CD8-positive, alpha-beta T cell (primary cell): ENCODE measurements at regions of chr20 and their contacts with region 1.

Region 1: GRCh38 chr20:48620519-48621254 is 207.1 kb downstream of the PREX1 start:
- DNase-seq: peak; percentile 42 to 78 (median 70)
- ATAC-seq: peak; percentile 92
- H3K4me3 ChIP-seq: no peak overlapping the region
- H3K4me3 Mint-ChIP-seq: peak overlapping the region; percentile 76
- H3K27ac ChIP-seq: no peak overlapping the region
- H3K27ac Mint-ChIP-seq: no peak overlapping the region
- H3K4me1 ChIP-seq: peaks cover 12% of the 10 kb centered on the region
- H3K4me1 Mint-ChIP-seq: peaks cover 10% of the 10 kb centered on the region
- H3K27me3 ChIP-seq: no peaks in the 10 kb centered on the region
- H3K27me3 Mint-ChIP-seq: no peaks in the 10 kb centered on the region
- CTCF ChIP-seq: peak; percentile 96

Region 2: GRCh38 chr20:47663333-47664067 is 957.2 kb before region 1 on chr20:
- CTCF ChIA-PET with region 1: interaction called, 39 read pairs
- POLR2A ChIA-PET with region 1: no interaction called
- intact Hi-C with region 1: loop called in 1 of 2 experiments (anchors 1 kb)
- DNase-seq: peak; percentile 59 to 83 (median 72)
- ATAC-seq: peak; percentile 87
- H3K4me3 ChIP-seq: no peak overlapping the region
- H3K4me3 Mint-ChIP-seq: no peak overlapping the region
- H3K27ac ChIP-seq: no peak overlapping the region
- H3K27ac Mint-ChIP-seq: no peak overlapping the region
- H3K4me1 ChIP-seq: no peaks in the 10 kb centered on the region
- H3K4me1 Mint-ChIP-seq: peaks cover 3% of the 10 kb centered on the region
- H3K27me3 ChIP-seq: no peaks in the 10 kb centered on the region
- H3K27me3 Mint-ChIP-seq: no peaks in the 10 kb centered on the region
- CTCF ChIP-seq: peak; percentile 87

Region 3: DNA sequence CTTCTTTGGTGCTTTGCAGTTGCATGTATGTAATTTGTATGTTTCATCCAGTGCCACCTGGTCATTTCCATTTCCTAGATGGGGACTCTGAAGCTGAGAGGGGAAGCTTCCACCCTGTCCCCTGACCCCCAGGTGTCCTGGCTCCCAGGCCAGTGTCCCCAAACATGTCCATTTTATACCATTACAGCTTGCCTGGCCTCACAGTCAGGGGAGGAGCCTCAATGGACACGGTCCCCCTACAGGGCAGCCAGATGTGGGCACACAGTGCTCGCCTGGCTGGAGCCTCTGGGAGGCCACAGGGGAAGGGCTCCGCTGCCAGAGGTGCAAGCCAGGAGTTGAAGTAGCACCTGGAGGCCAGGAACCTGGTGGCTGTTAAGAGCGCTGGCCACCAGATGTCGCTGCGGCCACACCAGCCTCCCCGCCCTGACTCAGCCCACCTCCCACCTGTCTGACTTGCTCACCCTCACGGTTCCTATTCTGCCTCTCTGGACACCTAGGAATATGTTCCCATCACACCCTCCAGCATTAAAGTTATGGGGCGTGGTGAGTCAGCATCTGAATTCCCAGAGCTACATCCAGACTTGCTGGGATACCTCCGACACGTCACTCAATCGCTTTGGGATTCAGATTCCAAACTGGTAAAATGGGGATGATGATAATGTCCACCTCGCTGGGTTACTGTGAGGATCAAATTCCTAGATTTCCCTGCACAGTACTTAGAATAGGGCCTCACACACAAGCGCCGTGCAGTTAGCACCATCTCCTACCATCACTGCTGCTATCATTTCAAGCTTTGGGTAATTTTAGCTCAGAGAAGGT is 942.8 kb before region 1 on chr20:
- CTCF ChIA-PET with region 1: interaction called, 92 read pairs
- POLR2A ChIA-PET with region 1: no interaction called
- intact Hi-C with region 1: loop called in 1 of 2 experiments (anchors 1 kb)
- DNase-seq: peak; percentile 16 to 69 (median 54)
- ATAC-seq: peak; percentile 68
- H3K4me3 ChIP-seq: no peak overlapping the region
- H3K4me3 Mint-ChIP-seq: no peak overlapping the region
- H3K27ac ChIP-seq: no peak overlapping the region
- H3K27ac Mint-ChIP-seq: no peak overlapping the region
- H3K4me1 ChIP-seq: peaks cover 4% of the 10 kb centered on the region
- H3K4me1 Mint-ChIP-seq: peaks cover 3% of the 10 kb centered on the region
- H3K27me3 ChIP-seq: no peaks in the 10 kb centered on the region
- H3K27me3 Mint-ChIP-seq: no peaks in the 10 kb centered on the region
- CTCF ChIP-seq: peak; percentile 67

Region 4: DNA sequence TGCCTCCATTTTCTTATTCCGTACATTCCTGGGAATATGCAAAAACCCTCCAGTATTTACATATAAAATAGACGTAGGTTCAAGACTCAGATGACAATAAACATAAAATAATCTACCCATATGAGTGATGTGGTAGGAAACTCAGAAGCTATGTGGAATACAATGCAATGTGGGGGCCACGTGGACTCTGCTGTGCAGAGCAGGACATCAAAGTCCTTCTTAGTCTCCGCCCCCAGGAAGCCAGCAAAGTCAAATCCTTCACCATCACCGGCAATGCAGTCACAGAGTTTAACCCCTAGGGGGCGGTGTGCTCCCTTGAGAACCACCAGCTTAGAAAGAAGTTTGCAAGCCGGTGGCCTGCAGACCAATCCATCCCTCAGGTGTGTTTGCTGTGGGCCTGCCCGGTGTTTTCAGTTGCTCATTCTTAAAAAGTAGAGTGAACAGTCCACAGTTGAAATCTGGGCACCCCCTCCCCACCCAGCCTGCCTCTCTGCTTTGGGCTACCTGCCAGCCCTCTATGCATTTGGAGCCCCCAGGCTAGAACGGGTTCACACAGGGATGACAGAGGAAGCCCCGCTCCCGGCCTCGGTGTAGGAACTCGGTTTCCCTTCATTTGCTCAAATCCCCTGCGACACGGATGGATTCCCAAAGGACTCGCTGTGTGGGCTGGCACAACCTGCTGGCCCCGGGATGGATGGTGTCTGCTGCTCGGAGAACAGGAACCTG is 895.3 kb before region 1 on chr20:
- CTCF ChIA-PET with region 1: interaction called, 49 read pairs
- POLR2A ChIA-PET with region 1: no interaction called
- intact Hi-C with region 1: loop called (anchors 1 kb)
- DNase-seq: peak; percentile 61 to 90 (median 80)
- ATAC-seq: peak; percentile 64
- H3K4me3 ChIP-seq: no peak overlapping the region
- H3K4me3 Mint-ChIP-seq: no peak overlapping the region
- H3K27ac ChIP-seq: no peak overlapping the region
- H3K27ac Mint-ChIP-seq: peak overlapping the region; percentile 52
- H3K4me1 ChIP-seq: peaks cover 36% of the 10 kb centered on the region
- H3K4me1 Mint-ChIP-seq: peaks cover 41% of the 10 kb centered on the region
- H3K27me3 ChIP-seq: no peaks in the 10 kb centered on the region
- H3K27me3 Mint-ChIP-seq: no peaks in the 10 kb centered on the region
- CTCF ChIP-seq: peak; percentile 91

Region 5: DNA sequence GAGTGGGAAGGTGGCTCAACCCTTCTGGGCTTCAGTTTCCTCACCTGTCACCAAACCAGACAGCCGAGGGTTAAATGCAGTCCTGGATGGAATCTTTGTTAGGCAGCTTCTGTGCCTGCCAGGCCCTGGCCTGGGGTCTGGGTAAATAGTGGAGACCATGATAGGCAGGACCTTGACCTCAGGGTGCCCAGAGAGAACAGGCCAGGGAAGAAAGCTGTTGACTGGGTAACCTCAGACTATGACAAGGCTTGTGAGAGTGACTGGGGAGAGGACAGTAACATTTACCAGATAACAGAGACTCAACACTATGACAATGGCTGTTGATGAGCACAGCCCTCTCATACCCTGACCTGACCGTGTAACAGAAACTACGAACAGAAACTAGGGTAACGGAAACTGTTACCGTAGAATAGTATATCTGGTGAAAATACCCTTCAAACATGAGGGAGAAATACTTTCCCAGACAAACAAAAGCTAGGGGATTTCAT is 11.2 kb before region 1 on chr20:
- CTCF ChIA-PET with region 1: interaction called, 12 read pairs
- POLR2A ChIA-PET with region 1: no interaction called
- intact Hi-C with region 1: no loop called
- DNase-seq: no peak
- ATAC-seq: no peak
- H3K4me3 ChIP-seq: no peak overlapping the region
- H3K4me3 Mint-ChIP-seq: no peak overlapping the region
- H3K27ac ChIP-seq: no peak overlapping the region
- H3K27ac Mint-ChIP-seq: no peak overlapping the region
- H3K4me1 ChIP-seq: no peaks in the 10 kb centered on the region
- H3K4me1 Mint-ChIP-seq: no peaks in the 10 kb centered on the region
- H3K27me3 ChIP-seq: no peaks in the 10 kb centered on the region
- H3K27me3 Mint-ChIP-seq: no peaks in the 10 kb centered on the region
- CTCF ChIP-seq: no peak

Region 6: DNA sequence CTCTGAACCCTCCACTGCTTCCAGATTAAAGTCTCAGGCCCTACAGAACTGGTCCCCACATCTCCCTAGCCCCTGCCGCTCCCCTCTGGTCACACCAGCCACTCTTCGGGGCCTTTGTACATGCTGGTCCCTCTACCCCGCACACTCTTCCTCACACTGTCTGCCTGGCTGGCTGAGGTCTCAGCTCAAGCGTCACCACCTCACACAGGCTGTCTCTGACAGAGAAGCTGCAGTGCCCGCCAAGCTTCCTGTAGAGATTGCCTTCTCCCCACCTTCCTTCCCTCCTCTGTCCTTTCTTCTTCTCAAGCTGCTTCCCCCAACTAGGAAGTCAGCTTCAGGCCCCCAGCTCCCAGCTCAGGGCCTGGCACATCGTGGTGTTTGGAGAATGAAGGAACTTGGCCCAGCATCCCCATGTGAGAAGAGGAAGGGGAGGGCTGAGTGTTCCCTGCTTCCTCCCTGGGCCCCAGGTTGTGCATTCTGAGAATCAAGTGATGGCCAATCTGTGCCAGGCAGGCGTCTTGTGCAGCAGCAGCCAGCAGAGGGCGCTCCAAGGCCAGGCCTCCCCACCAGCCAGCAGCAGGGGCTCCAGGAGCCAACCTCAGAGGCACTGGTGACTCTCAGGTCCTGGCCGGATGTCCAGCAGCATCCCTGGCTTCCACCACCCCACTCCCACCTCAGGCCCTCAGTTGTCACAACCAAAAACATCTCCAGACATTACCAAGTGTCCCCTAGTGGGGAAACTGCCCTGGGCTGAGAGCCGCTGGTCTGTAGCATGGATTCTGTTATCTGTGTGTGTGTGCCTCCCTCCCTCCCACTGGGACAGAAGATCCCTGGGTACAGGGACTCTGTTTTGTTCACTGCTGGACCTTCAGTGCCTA is 15.0 kb after region 1 on chr20:
- CTCF ChIA-PET with region 1: interaction called, 20 read pairs
- POLR2A ChIA-PET with region 1: no interaction called
- intact Hi-C with region 1: no loop called
- DNase-seq: peak in 8 of 9 experiments; percentile 52 to 74 (median 64)
- ATAC-seq: peak; percentile 34
- H3K4me3 ChIP-seq: no peak overlapping the region
- H3K4me3 Mint-ChIP-seq: no peak overlapping the region
- H3K27ac ChIP-seq: no peak overlapping the region
- H3K27ac Mint-ChIP-seq: no peak overlapping the region
- H3K4me1 ChIP-seq: no peaks in the 10 kb centered on the region
- H3K4me1 Mint-ChIP-seq: peaks cover 2% of the 10 kb centered on the region
- H3K27me3 ChIP-seq: no peaks in the 10 kb centered on the region
- H3K27me3 Mint-ChIP-seq: no peaks in the 10 kb centered on the region
- CTCF ChIP-seq: peak; percentile 13